OCI-LY7 (cell line): ENCODE measurements at regions of chr16 and their contacts with region 1.

Region 1: DNA sequence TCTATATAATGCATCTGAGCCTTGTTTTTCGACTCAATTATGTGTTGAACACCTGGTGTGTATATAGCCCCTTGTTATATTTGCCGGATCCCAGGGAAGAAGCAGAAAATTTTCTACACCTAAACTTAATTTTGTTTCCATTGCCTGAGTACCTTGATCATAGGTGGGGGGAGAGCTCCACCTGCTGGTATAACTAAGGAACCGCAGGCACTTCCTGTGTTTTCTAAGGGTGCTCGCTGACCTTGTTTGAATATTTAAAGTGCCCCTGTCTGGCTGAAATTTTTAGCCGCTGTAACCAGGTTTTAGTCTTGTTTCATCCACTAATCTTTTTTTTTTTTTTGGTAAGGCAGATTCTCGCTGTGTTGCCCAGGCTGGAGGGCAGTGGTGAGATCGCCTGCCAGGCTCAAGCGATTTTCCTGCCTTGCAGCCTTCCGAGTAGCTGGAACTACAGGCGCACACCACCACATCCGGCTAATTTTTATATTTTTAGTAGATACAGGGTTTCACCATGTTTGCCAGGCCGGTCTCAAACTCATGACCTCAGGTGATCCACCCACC is 6.5 kb upstream of the NUBP1 start:
- DNase-seq: peak; percentile 86
- H3K4me3 ChIP-seq: peak overlapping the region; percentile 52
- H3K27ac ChIP-seq: peak overlapping the region; percentile 62
- H3K4me1 ChIP-seq: peaks cover 34% of the 10 kb centered on the region
- CTCF ChIP-seq: peak; percentile 98

Region 2: DNA sequence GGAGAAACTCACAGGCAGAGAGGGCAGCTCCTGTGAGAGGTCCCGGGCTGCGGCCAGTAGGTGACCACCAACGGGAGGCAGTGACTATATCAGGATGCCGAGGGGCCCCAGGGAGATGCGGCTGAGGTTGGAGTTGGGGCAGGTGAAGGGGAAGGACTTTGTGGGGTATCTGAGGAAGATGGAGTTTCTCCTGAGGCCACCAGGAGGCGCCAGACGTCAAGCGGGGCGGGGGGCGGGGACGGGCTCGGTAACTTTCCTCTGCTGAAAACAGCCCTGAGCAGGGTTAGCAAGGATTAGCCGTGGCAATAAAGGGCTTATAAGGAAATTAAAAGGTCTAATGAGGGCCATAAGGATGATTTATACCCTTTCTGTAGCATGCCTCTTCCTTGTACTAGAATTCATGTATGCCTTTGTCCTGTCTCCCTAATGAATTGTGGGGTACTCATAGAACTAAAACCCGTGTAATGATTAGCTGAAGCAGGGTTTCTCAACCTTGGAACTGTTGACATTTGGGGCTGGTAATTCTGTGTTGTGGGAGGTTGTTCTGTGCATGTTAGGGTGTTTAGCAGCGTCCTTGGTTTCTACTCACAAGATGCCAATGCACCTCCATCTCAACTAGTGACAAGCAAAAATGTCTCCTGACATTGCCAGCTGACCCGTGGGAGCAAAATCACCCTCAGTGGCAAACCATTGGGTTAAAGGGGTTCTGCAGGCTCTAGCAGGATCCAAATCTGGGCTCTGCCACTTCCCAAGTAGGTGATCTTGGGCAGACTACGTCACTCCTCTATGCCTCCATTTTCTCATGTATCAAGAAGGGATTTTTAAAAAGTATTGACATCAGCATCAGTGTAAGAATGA is 480.1 kb before region 1 on chr16:
- CTCF ChIA-PET with region 1: no interaction called
- POLR2A ChIA-PET with region 1: no interaction called
- intact Hi-C with region 1: loop called (anchors 5 kb)
- DNase-seq: peak; percentile 67
- H3K4me3 ChIP-seq: no peak overlapping the region
- H3K27ac ChIP-seq: no peak overlapping the region
- H3K4me1 ChIP-seq: peaks cover 17% of the 10 kb centered on the region
- CTCF ChIP-seq: peak; percentile 85

Region 3: GRCh38 chr16:10314811-10315210 is 422.3 kb before region 1 on chr16:
- CTCF ChIA-PET with region 1: interaction called, 3 read pairs
- POLR2A ChIA-PET with region 1: no interaction called
- intact Hi-C with region 1: loop called (anchors 2 kb)
- DNase-seq: peak; percentile 66
- H3K4me3 ChIP-seq: no peak overlapping the region
- H3K27ac ChIP-seq: no peak overlapping the region
- H3K4me1 ChIP-seq: peaks cover 28% of the 10 kb centered on the region
- CTCF ChIP-seq: peak; percentile 73

Region 4: DNA sequence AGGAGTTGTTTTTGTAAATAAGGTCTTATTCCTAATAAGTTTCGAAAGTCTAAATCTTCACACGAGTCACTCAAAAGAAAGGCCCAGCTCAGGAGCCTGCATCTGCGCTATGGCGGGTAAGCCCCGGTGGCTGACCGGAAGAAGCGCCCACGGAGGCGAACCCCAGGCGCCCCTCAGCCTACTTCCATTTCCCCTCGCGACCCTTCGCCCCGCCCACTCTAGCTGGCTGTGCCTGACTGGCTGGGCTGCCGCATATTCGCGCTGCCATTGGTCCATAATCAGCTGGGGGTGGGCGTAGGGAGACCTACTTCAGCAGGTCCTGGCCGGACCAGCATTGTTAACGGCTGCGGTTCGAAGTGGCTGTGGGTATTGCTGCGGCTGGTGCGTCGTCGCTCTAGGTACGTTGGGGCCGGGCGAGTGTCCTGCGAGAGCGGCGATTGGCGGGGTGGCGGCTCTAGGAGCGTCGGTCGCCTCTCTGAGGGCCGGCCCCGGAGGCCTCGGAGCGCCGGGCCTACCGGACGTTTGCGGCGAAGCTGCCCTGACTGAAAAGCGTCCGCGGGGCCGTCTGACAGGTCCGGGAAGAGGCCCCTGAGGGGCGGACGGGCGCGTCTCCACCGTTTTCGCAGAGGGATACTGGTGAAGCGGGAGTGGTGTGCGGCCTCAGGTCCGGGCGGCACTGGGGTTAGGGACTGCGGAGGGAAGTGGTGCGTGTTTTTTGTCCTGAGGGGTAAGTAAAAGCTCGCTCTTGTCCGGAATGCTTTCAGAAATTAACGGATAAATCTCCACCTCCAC is 351.2 kb before region 1 on chr16 and contains the start of gene ATF7IP2:
- CTCF ChIA-PET with region 1: no interaction called
- POLR2A ChIA-PET with region 1: interaction called, 5 read pairs
- intact Hi-C with region 1: loop called (anchors 5 kb)
- DNase-seq: peak; percentile 96
- H3K4me3 ChIP-seq: peak within 1 kb of the TSS; percentile 88
- H3K27ac ChIP-seq: peak within 1 kb of the TSS; percentile 47
- H3K4me1 ChIP-seq: peaks cover 28% of the 10 kb centered on the region
- CTCF ChIP-seq: no peak
- total RNA-seq, gene ATF7IP2: 27.4 and 28.4 TPM in 2 replicates

Region 5: GRCh38 chr16:10509534-10510025 is 227.6 kb before region 1 on chr16:
- CTCF ChIA-PET with region 1: interaction called, 3 read pairs
- POLR2A ChIA-PET with region 1: interaction called, 5 read pairs
- intact Hi-C with region 1: loop called (anchors 1 kb)
- DNase-seq: peak; percentile 88
- H3K4me3 ChIP-seq: no peak overlapping the region
- H3K27ac ChIP-seq: no peak overlapping the region
- H3K4me1 ChIP-seq: no peaks in the 10 kb centered on the region
- CTCF ChIP-seq: peak; percentile 93

Region 6: DNA sequence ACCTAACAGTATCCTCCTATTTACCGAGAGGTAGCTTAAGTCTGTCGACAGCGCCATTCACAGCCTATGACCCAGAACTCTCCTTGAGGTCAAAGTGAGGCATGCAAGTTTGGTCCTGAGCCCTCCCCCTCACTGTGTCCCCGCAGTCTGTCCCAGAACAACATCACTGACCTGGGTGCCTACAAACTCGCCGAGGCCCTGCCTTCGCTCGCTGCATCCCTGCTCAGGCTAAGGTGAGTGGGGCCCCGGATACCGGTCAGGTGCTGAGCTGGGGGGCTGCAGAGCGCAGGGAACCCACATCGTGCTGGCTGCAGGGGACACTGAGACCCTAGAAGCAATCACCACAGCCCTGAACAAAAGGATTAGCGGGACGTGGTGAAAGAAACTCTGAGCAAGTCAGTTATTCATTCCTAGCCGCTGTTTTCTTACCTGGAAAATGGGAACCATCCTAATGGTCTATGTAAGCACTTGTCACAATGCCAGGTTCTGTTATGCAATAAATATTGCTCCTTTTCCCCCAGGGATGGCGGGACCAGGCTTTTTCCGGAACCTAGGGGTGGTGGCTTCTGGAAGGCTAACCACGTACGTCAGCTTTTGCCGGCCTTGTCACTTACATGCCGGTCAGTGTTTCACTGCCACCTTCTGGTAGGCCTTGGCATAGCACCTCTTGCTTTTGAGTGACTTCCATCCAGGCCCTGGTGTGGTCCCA is 181.3 kb after region 1 on chr16:
- CTCF ChIA-PET with region 1: no interaction called
- POLR2A ChIA-PET with region 1: interaction called, 3 read pairs
- intact Hi-C with region 1: loop called (anchors 2 kb)
- DNase-seq: peak; percentile 87
- H3K4me3 ChIP-seq: no peak overlapping the region
- H3K27ac ChIP-seq: no peak overlapping the region
- H3K4me1 ChIP-seq: peaks cover 6% of the 10 kb centered on the region
- CTCF ChIP-seq: peak; percentile 97